H1 (cell line): ENCODE measurements at regions of chr11 and their contacts with region 1.

Region 1: DNA sequence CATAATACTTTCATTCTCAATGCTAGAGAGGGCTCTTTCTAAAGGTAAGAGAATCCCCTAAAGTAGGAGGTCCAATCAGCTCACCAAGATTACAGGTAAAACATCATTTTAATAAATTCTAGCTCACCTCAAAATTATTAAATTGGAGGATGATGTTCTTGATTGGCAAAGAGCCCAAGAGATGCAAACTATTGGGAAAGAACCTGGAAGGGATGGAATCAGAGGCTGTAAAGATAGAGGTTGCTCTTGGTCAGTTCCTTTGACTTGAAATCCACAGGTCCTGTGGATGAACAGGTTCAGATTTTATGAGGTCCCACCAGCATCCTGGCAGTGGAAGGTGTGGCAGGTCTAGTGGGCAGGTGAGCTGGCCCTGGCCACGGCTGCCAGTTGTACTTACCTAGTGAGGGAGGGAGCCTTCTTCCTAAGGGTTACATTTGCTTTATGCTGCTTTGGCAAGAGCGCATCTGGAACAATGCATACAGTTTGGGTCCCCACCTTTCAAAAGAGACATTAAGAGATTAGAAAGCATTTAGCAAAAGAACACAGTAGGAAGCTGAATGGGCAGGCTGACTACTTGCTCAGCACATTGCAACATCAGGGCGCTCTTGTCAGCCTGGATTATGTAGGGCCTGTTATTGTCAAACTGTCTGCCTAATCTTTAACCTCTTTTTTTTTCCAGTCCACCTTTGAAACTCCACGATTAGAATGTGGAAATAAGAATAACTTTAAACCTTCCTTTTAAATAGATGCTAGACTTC is 97.1 kb downstream of the RDX start:
- DNase-seq: peak in 1 of 2 experiments; percentile 37
- H3K4me3 ChIP-seq: no peak overlapping the region
- H3K27ac ChIP-seq: no peak overlapping the region
- H3K4me1 ChIP-seq: peaks cover 0 to 8% (median 4%) of the 10 kb centered on the region in 4 experiments; a peak in 6 of 7 replicates
- H3K27me3 ChIP-seq: no peaks in the 10 kb centered on the region
- CTCF ChIP-seq: no peak
- EP300 ChIP-seq: no peak
- POLR2A ChIP-seq: no peak
- RAD21 ChIP-seq: no peak

Region 2: GRCh38 chr11:110185121-110185591 is 14.2 kb before region 1 on chr11:
- CTCF ChIA-PET with region 1: interaction called, 15 read pairs
- POLR2A ChIA-PET with region 1: no interaction called
- DNase-seq: no peak
- H3K4me3 ChIP-seq: no peak overlapping the region
- H3K27ac ChIP-seq: no peak overlapping the region
- H3K4me1 ChIP-seq: peaks cover 0 to 10% (median 9%) of the 10 kb centered on the region in 4 experiments
- H3K27me3 ChIP-seq: no peaks in the 10 kb centered on the region
- CTCF ChIP-seq: no peak
- EP300 ChIP-seq: no peak
- POLR2A ChIP-seq: no peak
- RAD21 ChIP-seq: no peak

Region 3: GRCh38 chr11:110249051-110249450 is 49.7 kb after region 1 on chr11:
- CTCF ChIA-PET with region 1: interaction called, 13 read pairs
- POLR2A ChIA-PET with region 1: no interaction called
- DNase-seq: no peak
- H3K4me3 ChIP-seq: no peak overlapping the region
- H3K27ac ChIP-seq: no peak overlapping the region
- H3K4me1 ChIP-seq: no peaks in the 10 kb centered on the region
- H3K27me3 ChIP-seq: no peaks in the 10 kb centered on the region
- CTCF ChIP-seq: no peak
- EP300 ChIP-seq: no peak
- POLR2A ChIP-seq: no peak
- RAD21 ChIP-seq: no peak

Region 4: DNA sequence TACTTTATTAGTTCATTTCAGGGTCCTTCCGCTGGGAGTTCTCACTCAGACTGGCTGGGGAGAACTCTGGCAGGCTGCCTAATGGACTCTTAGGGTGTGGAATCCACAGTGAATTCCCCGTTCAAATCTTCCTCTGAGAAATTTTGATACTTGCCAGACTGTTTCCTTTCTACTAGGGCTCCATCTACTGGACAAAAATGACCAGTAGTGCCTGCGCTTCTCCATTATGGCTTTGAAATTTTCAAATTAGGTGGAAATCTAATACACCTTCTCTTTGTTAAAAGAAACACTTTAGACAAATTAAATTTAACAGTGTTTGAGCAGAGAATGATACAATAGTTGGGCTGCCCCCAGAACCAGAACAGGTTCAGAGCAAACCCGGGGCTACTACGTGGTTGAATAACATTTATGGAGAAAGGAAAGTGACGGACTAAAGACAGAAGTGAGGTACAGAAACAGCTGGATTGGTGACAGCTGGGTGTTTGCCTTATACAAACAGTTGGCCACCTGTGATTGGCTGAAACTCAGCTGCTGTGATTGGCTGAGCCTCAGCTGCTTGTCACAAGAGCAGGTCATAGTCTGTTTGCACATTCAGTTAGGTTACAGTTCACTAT is 177.5 kb after region 1 on chr11:
- CTCF ChIA-PET with region 1: interaction called, 26 read pairs
- POLR2A ChIA-PET with region 1: no interaction called
- DNase-seq: peak in 1 of 2 experiments; percentile 25
- H3K4me3 ChIP-seq: no peak overlapping the region
- H3K27ac ChIP-seq: no peak overlapping the region
- H3K4me1 ChIP-seq: no peaks in the 10 kb centered on the region
- H3K27me3 ChIP-seq: no peaks in the 10 kb centered on the region
- CTCF ChIP-seq: peak in 2 of 3 experiments; percentile 56 to 58; a peak in 3 of 4 replicates
- EP300 ChIP-seq: no peak
- POLR2A ChIP-seq: no peak
- RAD21 ChIP-seq: peak; percentile 78 to 83

Region 5: GRCh38 chr11:110447897-110448745 is 248.8 kb after region 1 on chr11:
- CTCF ChIA-PET with region 1: interaction called, 17 read pairs
- POLR2A ChIA-PET with region 1: interaction called, 3 read pairs
- DNase-seq: no peak
- H3K4me3 ChIP-seq: no peak overlapping the region
- H3K27ac ChIP-seq: no peak overlapping the region
- H3K4me1 ChIP-seq: no peaks in the 10 kb centered on the region
- H3K27me3 ChIP-seq: no peaks in the 10 kb centered on the region
- CTCF ChIP-seq: peak in 2 of 3 experiments; percentile 24 to 30; a peak in 2 of 4 replicates
- EP300 ChIP-seq: no peak
- POLR2A ChIP-seq: no peak
- RAD21 ChIP-seq: peak in 1 of 2 experiments; percentile 51